GM12878 (cell line): ENCODE measurements at regions of chr1 and their contacts with region 1.

Region 1: DNA sequence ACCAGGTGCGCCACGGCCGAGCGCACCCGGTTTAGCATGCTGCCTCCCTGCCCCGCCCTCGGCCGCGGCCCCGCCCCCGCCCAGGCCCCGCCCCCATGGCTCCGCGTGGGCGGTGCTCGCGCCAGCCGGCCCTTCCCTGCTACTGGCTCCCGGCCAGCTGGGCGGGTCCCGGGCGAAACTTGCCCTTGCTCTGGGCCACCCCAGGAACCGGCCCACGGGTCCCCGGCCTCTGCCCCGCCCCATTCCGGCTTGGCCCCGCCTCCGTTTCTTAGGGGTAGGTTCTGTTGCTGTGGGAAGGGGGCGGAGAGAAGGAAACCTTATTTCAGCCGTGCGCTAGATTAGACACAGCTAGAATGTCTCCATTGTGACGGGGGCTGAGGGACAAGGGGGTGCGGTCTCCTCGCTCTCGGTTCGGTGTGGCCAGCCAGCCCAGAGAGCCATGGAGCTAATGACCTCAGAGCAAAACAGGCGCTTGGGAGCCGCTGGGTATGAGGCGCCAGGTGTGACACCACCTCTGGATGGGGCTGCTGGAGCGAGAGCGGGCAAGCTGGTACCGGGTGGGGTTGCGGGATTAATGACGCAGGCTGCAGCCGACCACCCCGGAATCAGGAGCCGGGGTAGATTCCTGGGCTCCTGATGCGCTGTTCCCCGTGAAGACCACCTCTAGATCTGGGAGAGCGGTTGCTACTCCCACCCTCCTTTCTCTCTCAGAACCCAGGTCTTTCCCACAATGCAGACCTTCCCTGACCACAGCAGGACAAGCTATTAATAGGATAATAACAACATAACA is at the start of gene PPM1J:
- DNase-seq: peak; percentile 60
- ATAC-seq: peak; percentile 87
- H3K4me3 ChIP-seq: peak within 1 kb of the TSS; percentile 79
- H3K27ac ChIP-seq: no peak within 1 kb of the TSS
- H3K4me1 ChIP-seq: peaks cover 22% of the 10 kb centered on the region
- H3K27me3 ChIP-seq: peaks cover 0 to 3% of the 10 kb centered on the region in 2 experiments; a peak in 1 of 4 replicates
- CTCF ChIP-seq: no peak
- EP300 ChIP-seq: no peak
- POLR2A ChIP-seq: no peak
- RAD21 ChIP-seq: no peak
- polyA plus RNA-seq, gene PPM1J: 0.07 TPM in 1 of 2 experiments, not detected in the other

Region 2: DNA sequence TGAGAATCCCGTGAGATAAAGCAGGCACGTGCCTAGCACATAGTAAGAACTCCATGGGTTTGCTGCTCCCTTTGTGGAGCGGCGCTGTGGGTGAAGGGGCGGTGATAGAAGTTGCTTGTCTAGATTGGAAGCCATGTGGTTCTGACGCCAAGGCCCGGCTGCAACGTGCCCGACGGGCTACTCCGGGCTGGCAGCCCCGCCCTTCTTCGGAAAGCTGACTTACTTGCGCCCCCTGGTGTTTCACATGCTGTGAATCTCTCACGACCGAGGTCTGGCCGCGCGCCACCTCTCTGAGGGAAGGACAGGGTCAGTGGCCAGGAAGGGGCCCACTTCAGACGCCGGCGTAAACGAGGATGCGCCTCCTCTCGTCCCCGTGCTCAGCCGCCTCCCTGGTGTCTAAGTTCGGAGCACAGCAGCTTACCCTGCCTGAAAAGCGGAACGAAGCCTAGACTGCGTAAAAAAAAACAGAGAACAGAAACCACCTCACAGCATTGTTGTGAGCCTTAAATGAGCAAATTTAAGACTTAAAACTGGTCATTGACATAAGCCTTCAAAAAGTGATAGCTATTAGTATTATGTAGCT is 249.3 kb before region 1 on chr1:
- CTCF ChIA-PET with region 1: interaction called, 6 read pairs
- POLR2A ChIA-PET with region 1: no interaction called
- RAD21 ChIA-PET with region 1: interaction called, 11 read pairs
- SMC1A ChIA-PET with region 1: interaction called, 6 read pairs
- in situ Hi-C with region 1: no loop called
- intact Hi-C with region 1: no loop called
- DNase-seq: peak; percentile 95
- ATAC-seq: peak; percentile 99
- H3K4me3 ChIP-seq: no peak overlapping the region
- H3K27ac ChIP-seq: peak overlapping the region; percentile 14
- H3K4me1 ChIP-seq: peaks cover 15% of the 10 kb centered on the region
- H3K27me3 ChIP-seq: no peaks in the 10 kb centered on the region
- CTCF ChIP-seq: peak; percentile 77 to 91 (median 81); a peak in 5 of 6 replicates
- EP300 ChIP-seq: peak; percentile 85 to 94; a peak in 3 of 4 replicates
- POLR2A ChIP-seq: peak; percentile 61
- RAD21 ChIP-seq: peak; percentile 72

Region 3: DNA sequence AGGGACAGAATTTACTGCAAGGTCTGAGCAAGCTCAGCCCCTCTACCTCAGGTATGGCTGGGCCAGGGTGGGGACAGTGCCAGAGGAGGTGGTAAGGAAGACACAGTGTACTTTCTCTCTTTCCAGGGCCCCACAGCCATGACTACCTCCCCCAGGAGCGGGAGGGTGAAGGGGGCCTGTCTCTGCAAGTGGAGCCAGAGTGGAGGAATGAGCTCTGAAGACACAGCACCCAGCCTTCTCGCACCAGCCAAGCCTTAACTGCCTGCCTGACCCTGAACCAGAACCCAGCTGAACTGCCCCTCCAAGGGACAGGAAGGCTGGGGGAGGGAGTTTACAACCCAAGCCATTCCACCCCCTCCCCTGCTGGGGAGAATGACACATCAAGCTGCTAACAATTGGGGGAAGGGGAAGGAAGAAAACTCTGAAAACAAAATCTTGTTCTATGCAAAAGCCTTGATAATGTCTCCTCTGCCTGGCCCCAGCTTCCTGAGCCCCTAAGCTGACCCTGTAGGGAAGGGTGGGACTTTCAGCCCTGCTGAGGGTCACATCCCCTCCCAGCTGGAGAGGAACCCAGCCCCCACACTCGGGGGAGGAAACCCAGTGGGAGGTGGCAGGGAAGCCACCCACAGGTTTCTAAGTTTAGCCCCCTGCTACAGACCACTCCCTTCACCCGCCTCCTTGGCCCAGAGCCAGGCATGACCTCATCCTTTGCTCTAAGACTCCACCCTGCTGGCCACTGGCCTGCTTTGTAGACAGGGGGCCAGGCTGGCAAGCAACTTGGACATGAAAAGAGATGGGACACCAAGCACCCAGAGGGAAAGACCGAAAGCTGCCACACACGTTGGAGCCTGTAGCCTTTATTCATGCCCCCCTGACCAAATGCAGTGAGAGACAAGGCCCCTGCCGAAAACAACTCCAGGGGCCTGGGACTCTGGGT is 14.9 kb before region 1 on chr1:
- CTCF ChIA-PET with region 1: interaction called, 48 read pairs
- POLR2A ChIA-PET with region 1: interaction called, 9 read pairs
- RAD21 ChIA-PET with region 1: interaction called, 22 read pairs
- SMC1A ChIA-PET with region 1: interaction called, 14 read pairs
- in situ Hi-C with region 1: no loop called
- intact Hi-C with region 1: no loop called
- DNase-seq: peak; percentile 65
- ATAC-seq: peak; percentile 73
- H3K4me3 ChIP-seq: no peak overlapping the region
- H3K27ac ChIP-seq: peak overlapping the region; percentile 62
- H3K4me1 ChIP-seq: peaks cover 28% of the 10 kb centered on the region
- H3K27me3 ChIP-seq: no peaks in the 10 kb centered on the region
- CTCF ChIP-seq: peak in 1 of 3 experiments; percentile 11; a peak in 1 of 6 replicates
- EP300 ChIP-seq: no peak
- POLR2A ChIP-seq: 0 out of 2 replicates have a peak, but pooled peaks have one; percentile 56
- RAD21 ChIP-seq: no peak

Region 4: GRCh38 chr1:112762541-112763517 is 47.4 kb after region 1 on chr1:
- CTCF ChIA-PET with region 1: interaction called, 18 read pairs
- POLR2A ChIA-PET with region 1: no interaction called
- RAD21 ChIA-PET with region 1: no interaction called
- SMC1A ChIA-PET with region 1: no interaction called
- in situ Hi-C with region 1: no loop called
- intact Hi-C with region 1: no loop called
- DNase-seq: no peak
- ATAC-seq: peak; percentile 23; the same call in 1 of the 3 replicates
- H3K4me3 ChIP-seq: no peak overlapping the region
- H3K27ac ChIP-seq: no peak overlapping the region
- H3K4me1 ChIP-seq: no peaks in the 10 kb centered on the region
- H3K27me3 ChIP-seq: peaks cover 0 to 2% of the 10 kb centered on the region in 2 experiments; a peak in 1 of 4 replicates
- CTCF ChIP-seq: no peak
- EP300 ChIP-seq: no peak
- POLR2A ChIP-seq: no peak
- RAD21 ChIP-seq: no peak

Region 5: GRCh38 chr1:112882271-112882744 is 166.8 kb after region 1 on chr1:
- CTCF ChIA-PET with region 1: interaction called, 5 read pairs
- POLR2A ChIA-PET with region 1: no interaction called
- RAD21 ChIA-PET with region 1: interaction called, 5 read pairs
- SMC1A ChIA-PET with region 1: interaction called, 3 read pairs
- in situ Hi-C with region 1: no loop called
- intact Hi-C with region 1: loop called (anchors 5 kb)
- DNase-seq: no peak
- ATAC-seq: no peak
- H3K4me3 ChIP-seq: no peak overlapping the region
- H3K27ac ChIP-seq: no peak overlapping the region
- H3K4me1 ChIP-seq: no peaks in the 10 kb centered on the region
- H3K27me3 ChIP-seq: no peaks in the 10 kb centered on the region; a peak in 1 of 4 replicates
- CTCF ChIP-seq: no peak
- EP300 ChIP-seq: no peak
- POLR2A ChIP-seq: no peak
- RAD21 ChIP-seq: no peak

Region 6: DNA sequence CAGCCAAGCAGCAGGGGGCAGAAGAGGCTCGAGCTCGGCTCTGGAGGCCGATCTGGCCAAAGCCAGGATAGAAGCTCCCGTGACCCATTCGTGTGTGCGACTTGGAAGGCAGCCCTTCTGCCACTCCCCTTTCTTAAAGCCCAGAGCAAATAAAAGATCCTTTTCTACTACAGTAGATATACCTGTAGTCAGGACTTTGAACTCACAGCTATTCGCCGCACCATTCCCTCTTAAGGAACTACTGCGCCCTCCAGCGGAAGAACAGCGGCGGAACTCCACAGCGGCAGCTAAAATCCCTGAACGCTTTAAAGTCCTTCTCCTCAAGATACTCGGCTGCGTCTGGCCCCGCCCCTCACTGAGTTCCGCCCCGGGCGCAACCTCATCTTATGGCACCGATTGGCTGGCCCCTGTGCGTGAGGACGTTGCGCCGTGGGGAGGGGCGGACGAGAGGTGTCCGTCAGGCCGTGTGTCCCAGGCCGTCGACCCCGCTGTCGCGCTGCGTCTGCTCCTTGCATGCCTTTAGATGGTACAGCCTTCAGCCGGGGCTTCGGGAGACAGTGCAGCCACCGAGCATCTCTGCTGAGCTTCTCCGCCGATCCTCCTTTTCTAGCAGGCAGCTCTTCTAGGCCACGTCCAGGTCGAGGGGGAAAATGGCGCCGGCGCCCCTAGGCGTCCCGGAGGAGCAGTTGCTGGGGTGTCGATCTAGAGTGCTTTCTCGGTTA is 357.5 kb after region 1 on chr1 and contains the start of gene LRIG2:
- CTCF ChIA-PET with region 1: interaction called, 43 read pairs
- POLR2A ChIA-PET with region 1: interaction called, 5 read pairs
- RAD21 ChIA-PET with region 1: interaction called, 25 read pairs
- SMC1A ChIA-PET with region 1: interaction called, 20 read pairs
- in situ Hi-C with region 1: no loop called
- intact Hi-C with region 1: loop called (anchors 2 kb)
- DNase-seq: peak; percentile 91
- ATAC-seq: peak; percentile 98
- H3K4me3 ChIP-seq: peak within 1 kb of the TSS; percentile 91
- H3K27ac ChIP-seq: peak within 1 kb of the TSS; percentile 85
- H3K4me1 ChIP-seq: peaks cover 4% of the 10 kb centered on the region; the same call in 1 of the 2 replicates
- H3K27me3 ChIP-seq: no peaks in the 10 kb centered on the region
- CTCF ChIP-seq: peak; percentile 41 to 75 (median 65)
- EP300 ChIP-seq: 0 out of 4 replicates have a peak, but pooled peaks of 1 of the 2 experiments have one; percentile 26
- POLR2A ChIP-seq: peak; percentile 99
- RAD21 ChIP-seq: peak; percentile 56
- polyA plus RNA-seq, gene LRIG2: 0.77 to 1.3 TPM

Region 7: DNA sequence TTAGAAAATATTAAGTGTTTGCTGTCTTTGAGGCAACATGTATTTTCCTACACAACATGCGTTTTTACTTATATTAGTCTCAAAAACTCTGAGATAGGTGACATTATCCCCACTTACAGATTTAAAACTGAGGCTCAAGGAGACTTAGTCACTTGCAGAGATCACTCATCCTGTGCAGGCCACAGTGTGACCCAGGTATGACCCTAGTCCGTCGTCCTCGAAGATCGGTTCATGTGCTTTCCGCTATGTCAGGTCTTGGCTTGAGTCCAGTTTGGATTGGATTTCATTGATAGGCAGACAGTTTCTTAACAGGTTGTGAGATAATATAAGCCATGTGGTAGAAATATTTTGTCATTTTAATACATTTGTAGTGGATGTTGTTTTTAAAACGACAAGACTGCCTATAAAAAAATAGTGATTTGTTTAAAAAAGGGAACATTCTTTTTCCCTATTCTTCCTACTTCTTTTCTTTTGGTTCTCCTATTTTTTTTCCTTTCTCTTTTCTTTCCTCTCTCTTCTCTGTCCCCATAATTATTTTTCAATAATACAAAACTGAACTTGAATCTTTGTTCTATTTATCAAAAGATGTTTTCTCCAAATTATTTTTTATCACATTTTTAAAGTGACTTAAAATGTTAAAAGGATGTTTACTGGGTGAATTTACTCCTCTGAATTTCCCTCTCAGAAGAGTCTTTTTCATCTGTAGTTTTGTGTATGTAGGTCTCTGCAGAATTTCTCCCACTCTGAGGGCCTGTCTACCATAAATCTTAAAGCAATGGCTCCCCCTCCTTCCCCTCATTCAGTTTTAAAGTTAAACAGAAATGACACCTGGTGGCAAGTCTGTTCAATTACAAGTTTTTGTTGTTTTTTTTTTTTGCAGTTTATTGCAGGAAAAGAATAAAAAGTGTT is 962.0 kb after region 1 on chr1:
- CTCF ChIA-PET with region 1: interaction called, 7 read pairs
- POLR2A ChIA-PET with region 1: no interaction called
- RAD21 ChIA-PET with region 1: no interaction called
- SMC1A ChIA-PET with region 1: no interaction called
- in situ Hi-C with region 1: no loop called
- intact Hi-C with region 1: loop called (anchors 5 kb)
- DNase-seq: no peak
- ATAC-seq: peak; percentile 74; the same call in 2 of the 3 replicates
- H3K4me3 ChIP-seq: no peak overlapping the region
- H3K27ac ChIP-seq: no peak overlapping the region
- H3K4me1 ChIP-seq: no peaks in the 10 kb centered on the region
- H3K27me3 ChIP-seq: no peaks in the 10 kb centered on the region
- CTCF ChIP-seq: peak; percentile 36 to 52 (median 42); a peak in 5 of 6 replicates
- EP300 ChIP-seq: no peak
- POLR2A ChIP-seq: no peak
- RAD21 ChIP-seq: peak; percentile 81